Panc1 (cell line): ENCODE measurements at regions of chr2 and their contacts with region 1.

Region 1: DNA sequence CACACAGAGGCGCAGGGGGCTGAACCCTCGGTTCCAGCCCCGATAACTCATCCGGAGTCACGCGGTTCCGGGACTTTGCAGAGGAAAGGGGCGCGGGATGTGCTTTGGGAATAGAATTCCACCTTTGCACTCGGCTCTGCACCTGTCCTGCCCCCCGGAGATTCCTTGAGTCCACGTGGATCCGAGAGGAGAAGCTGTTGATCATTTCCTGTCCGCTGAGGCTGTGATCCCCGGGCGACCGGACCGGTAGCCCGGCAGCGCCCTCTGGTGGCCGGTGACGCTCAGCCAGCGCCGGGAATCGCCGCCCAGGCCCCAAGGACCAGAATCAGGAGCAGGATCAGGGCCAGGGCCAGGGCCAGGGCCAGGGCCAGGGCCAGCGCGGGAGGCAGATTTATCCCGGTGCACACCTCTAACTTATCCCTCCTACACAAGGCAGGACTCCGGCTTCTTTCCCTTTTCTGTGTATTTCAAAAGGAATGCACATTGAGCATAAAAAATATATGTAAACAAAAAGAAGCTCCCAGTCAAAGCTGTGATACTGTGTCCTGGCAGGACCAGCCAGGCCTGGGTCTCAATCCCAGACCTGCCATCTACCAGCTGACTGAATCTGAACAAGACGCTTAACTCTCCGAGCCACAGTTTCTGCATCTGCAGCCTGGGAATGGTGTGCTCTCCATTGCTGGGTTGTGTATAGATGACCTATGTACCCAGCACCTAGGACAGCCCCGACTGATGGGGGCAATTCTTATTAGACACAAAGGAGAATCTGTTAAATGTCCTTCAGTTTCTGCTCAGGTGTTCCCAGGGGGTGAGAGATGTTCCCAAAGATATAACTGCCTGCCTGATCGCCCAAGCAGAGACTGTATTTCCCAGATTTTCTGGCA is 8.5 kb upstream of the SPATA3 start:
- DNase-seq: peak; percentile 20
- ATAC-seq: peak; percentile 94
- H3K4me3 ChIP-seq: peak overlapping the region; percentile 41 to 61
- H3K27ac ChIP-seq: peak overlapping the region; percentile 66
- H3K4me1 ChIP-seq: peaks cover 4% of the 10 kb centered on the region
- H3K27me3 ChIP-seq: no peaks in the 10 kb centered on the region
- CTCF ChIP-seq: peak; percentile 96

Region 2: GRCh38 chr2:229748950-229749349 is 1238.4 kb before region 1 on chr2:
- CTCF ChIA-PET with region 1: no interaction called
- POLR2A ChIA-PET with region 1: no interaction called
- in situ Hi-C with region 1: no loop called
- intact Hi-C with region 1: no loop called
- DNase-seq: no peak
- ATAC-seq: 0 out of 2 replicates have a peak, but pooled peaks have one; percentile 72
- H3K4me3 ChIP-seq: no peak overlapping the region
- H3K27ac ChIP-seq: no peak overlapping the region
- H3K4me1 ChIP-seq: no peaks in the 10 kb centered on the region
- H3K27me3 ChIP-seq: no peaks in the 10 kb centered on the region
- CTCF ChIP-seq: no peak; the same call in 1 of the 2 replicates

Region 3: GRCh38 chr2:229849073-229849472 is 1138.3 kb before region 1 on chr2:
- CTCF ChIA-PET with region 1: no interaction called
- POLR2A ChIA-PET with region 1: no interaction called
- in situ Hi-C with region 1: no loop called
- intact Hi-C with region 1: no loop called
- DNase-seq: no peak
- ATAC-seq: no peak
- H3K4me3 ChIP-seq: no peak overlapping the region
- H3K27ac ChIP-seq: no peak overlapping the region
- H3K4me1 ChIP-seq: peaks cover 15% of the 10 kb centered on the region; the same call in 1 of the 2 replicates
- H3K27me3 ChIP-seq: no peaks in the 10 kb centered on the region
- CTCF ChIP-seq: no peak

Region 4: DNA sequence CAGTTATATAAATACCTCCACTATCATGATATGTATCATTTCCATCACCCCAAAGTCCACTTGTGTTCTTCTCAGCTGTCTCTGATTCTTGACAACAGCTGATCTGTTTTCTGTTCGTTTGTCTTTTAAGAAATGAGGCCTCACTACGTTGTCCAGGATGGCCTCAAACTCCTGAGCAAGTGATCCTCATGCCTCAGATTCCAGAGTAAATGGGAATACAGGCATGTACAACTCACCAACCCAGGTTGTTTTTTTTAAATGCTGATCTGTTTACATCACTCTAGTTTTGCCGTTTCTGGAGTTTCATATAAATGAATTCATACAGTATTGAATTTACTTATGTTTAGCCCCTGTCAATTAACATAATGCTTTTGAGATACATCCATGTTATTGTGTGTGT is 610.3 kb before region 1 on chr2:
- CTCF ChIA-PET with region 1: no interaction called
- POLR2A ChIA-PET with region 1: no interaction called
- in situ Hi-C with region 1: no loop called
- intact Hi-C with region 1: no loop called
- DNase-seq: no peak
- ATAC-seq: no peak
- H3K4me3 ChIP-seq: no peak overlapping the region
- H3K27ac ChIP-seq: no peak overlapping the region
- H3K4me1 ChIP-seq: no peaks in the 10 kb centered on the region
- H3K27me3 ChIP-seq: no peaks in the 10 kb centered on the region
- CTCF ChIP-seq: no peak

Region 5: DNA sequence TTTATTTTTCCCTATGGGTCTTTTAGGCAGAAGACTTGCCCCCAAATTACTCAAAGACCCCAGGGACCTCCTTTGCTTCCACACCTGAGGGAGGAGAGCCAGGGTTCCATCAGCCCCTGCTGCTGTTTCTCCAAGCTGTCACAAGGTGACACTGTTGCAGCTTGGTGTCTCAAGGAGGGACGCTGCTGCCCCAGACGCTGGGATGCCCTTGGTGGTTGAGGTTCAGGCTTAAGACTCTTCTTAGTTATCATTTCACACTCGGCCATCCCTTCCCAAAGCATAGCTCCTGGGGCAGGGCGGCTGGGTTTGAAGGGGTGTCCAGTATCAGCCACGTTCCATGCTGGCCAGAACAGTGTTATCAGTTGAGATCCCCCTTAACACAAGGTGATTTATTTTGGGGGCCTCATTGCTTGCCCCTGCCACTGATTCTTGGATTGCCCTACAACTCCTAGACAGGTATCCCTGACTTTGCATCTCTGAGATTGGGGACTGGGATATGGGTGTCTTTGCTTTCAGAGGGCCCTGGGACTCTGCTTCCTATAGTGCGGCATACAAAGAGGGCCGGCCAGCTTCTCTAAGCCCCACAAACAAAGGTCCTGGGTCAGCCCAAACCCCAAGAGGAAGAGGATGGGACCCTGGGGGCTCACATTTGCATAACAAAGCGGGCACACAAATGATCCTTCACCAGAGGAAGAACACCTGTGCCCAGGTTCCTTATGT is 85.0 kb before region 1 on chr2:
- CTCF ChIA-PET with region 1: interaction called, 9 read pairs
- POLR2A ChIA-PET with region 1: no interaction called
- in situ Hi-C with region 1: no loop called
- intact Hi-C with region 1: loop called (anchors 1 kb)
- DNase-seq: peak; percentile 42
- ATAC-seq: peak; percentile 87
- H3K4me3 ChIP-seq: no peak overlapping the region
- H3K27ac ChIP-seq: no peak overlapping the region
- H3K4me1 ChIP-seq: no peaks in the 10 kb centered on the region
- H3K27me3 ChIP-seq: no peaks in the 10 kb centered on the region
- CTCF ChIP-seq: peak; percentile 93

Region 6: GRCh38 chr2:230909841-230910545 is 77.4 kb before region 1 on chr2:
- CTCF ChIA-PET with region 1: no interaction called
- POLR2A ChIA-PET with region 1: no interaction called
- in situ Hi-C with region 1: no loop called
- intact Hi-C with region 1: loop called (anchors 5 kb)
- DNase-seq: no peak
- ATAC-seq: no peak
- H3K4me3 ChIP-seq: no peak overlapping the region
- H3K27ac ChIP-seq: no peak overlapping the region
- H3K4me1 ChIP-seq: no peaks in the 10 kb centered on the region
- H3K27me3 ChIP-seq: no peaks in the 10 kb centered on the region
- CTCF ChIP-seq: no peak